H1 (cell line): ENCODE measurements at regions of chr9 and their contacts with region 1.

Region 1: GRCh38 chr9:134040781-134041648 is 15.7 kb downstream of the BRD3OS start:
- DNase-seq: no peak
- H3K4me3 ChIP-seq: no peak overlapping the region
- H3K27ac ChIP-seq: no peak overlapping the region
- H3K4me1 ChIP-seq: no peaks in the 10 kb centered on the region; a peak in 1 of 7 replicates
- H3K27me3 ChIP-seq: no peaks in the 10 kb centered on the region
- CTCF ChIP-seq: no peak
- EP300 ChIP-seq: no peak
- POLR2A ChIP-seq: no peak
- RAD21 ChIP-seq: no peak

Region 2: GRCh38 chr9:134025606-134026541 is 15.1 kb before region 1 on chr9:
- CTCF ChIA-PET with region 1: interaction called, 8 read pairs
- POLR2A ChIA-PET with region 1: interaction called, 11 read pairs
- DNase-seq: peak in 1 of 2 experiments; percentile 77
- H3K4me3 ChIP-seq: peak overlapping the region; percentile 70 to 85 (median 79)
- H3K27ac ChIP-seq: no peak overlapping the region
- H3K4me1 ChIP-seq: peaks cover 0 to 4% (median 4%) of the 10 kb centered on the region in 4 experiments; a peak in 5 of 7 replicates
- H3K27me3 ChIP-seq: no peaks in the 10 kb centered on the region
- CTCF ChIP-seq: peak in 2 of 3 experiments; percentile 23 to 36; a peak in 3 of 4 replicates
- EP300 ChIP-seq: no peak
- POLR2A ChIP-seq: no peak
- RAD21 ChIP-seq: peak in 1 of 2 experiments; percentile 33; a peak in 1 of 4 replicates